IMR-90 (cell line): ENCODE measurements at regions of chr5 and their contacts with region 1.

Region 1: DNA sequence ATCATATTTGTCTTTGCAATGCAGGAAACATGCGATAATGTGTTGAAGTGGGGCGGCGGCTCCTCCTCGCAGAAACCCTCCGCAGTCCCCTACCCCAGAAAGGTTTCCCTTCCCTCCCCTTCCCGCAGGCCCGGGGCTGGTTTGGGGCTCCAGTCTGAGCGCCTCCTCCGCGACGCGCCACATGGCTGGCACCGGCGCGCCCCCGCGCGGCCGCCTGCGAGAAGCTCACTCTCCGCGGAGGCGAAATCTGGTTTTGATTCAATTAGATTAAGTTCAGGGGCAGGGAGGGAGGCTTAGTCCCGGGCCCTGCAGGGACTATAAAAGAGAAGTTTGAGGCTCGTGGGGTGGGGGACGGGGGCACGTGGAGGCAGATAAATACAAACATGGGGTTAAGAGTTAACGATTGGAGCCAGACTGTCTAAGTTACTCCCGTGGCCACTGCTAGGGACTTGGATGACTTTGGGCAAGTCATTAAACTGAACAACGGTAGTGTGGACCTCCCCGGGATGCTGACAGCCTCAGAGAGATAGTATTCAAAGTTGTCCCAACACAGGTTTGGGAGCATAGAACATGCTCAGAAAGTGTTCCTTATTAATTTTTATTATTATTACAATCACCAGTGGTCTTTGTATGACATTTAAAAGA is 69.4 kb downstream of the MSX2 start:
- DNase-seq: peak; percentile 43
- ATAC-seq: peak; percentile 98
- H3K4me3 ChIP-seq: no peak overlapping the region
- H3K27ac ChIP-seq: no peak overlapping the region
- H3K4me1 ChIP-seq: peaks cover 3% of the 10 kb centered on the region; the same call in 1 of the 2 replicates
- H3K27me3 ChIP-seq: peaks cover 6% of the 10 kb centered on the region
- CTCF ChIP-seq: peak; percentile 89
- POLR2A ChIP-seq: no peak
- RAD21 ChIP-seq: peak; percentile 94

Region 2: DNA sequence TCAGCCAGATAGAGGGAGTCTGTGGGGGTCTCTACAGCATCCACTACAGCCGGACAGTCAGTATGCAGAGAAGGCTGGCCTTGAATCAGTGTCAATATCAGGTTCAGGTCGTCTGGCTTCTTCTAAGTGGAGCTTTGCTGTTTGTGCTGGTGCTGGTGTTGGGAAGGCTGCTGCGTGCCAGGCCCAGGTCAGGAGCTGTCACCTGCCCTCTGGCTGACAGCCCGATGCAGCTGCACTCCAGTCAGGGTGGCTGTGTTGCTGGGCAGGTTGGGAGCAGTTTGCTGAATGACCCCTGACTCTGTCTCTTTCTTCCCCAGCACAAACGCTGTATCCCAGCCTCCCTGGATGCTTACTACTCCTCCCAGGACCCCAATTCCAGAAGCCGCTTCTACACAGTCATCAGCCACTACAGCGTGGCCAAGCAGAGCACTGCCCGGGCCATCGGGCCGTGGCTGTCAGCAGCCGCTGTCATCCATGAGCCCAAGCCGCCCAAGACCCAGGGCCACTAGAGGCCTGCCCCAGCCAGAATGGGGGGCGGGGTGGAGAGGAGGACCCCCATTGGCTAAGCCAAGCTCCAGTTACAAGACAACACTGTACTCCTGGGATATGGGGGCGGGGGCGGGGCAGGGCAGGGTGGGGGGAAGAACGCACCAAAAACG is 686.7 kb before region 1 on chr5:
- CTCF ChIA-PET with region 1: no interaction called
- POLR2A ChIA-PET with region 1: no interaction called
- dilution Hi-C with region 1: no loop called
- in situ Hi-C with region 1: no loop called
- intact Hi-C with region 1: no loop called
- DNase-seq: no peak
- ATAC-seq: no peak
- H3K4me3 ChIP-seq: no peak overlapping the region
- H3K27ac ChIP-seq: no peak overlapping the region
- H3K4me1 ChIP-seq: no peaks in the 10 kb centered on the region
- H3K27me3 ChIP-seq: no peaks in the 10 kb centered on the region
- CTCF ChIP-seq: no peak
- POLR2A ChIP-seq: no peak
- RAD21 ChIP-seq: no peak

Region 3: DNA sequence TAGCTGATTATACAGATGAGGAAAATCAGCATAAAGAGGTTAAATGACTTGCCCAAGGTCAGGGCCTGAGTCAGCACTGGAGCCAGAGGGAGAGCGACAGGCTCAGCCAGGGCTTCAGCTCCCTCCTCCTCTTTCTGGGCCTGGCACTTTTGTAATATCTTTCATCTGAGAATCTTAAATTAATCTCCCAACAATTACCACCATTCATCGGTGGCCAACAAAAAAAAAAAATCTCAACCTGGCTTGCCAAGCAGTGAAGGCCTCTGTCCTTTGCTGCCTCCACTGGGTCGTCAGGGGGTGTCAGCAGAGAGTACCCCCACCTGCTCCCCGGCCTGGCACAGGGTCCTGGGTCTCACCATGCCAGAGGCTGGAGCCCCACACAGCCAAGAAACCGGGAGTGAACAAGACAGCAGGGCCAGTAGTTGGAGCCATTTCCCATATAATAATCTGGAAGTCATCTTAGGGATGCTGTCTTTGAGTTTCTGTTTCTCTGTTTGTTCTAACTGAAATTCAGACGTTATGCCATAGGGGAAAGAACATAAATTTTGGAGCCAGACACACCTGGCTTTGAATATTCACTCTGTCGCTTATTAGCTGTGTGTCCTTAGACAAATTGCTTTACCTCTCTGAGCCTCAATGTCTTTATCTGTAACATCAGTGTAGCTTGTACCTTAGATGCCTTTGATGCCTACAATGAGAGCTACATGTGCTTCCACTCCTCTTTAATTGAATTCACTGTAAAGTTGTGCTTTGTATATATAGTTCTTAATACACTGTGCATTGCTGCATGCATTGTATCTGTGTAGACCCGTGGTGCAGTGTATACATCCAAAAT is 369.4 kb before region 1 on chr5:
- CTCF ChIA-PET with region 1: interaction called, 24 read pairs
- POLR2A ChIA-PET with region 1: no interaction called
- dilution Hi-C with region 1: no loop called
- in situ Hi-C with region 1: loop called (anchors 5 kb)
- intact Hi-C with region 1: loop called (anchors 1 kb)
- DNase-seq: no peak
- ATAC-seq: no peak; the same call in 1 of the 2 replicates
- H3K4me3 ChIP-seq: no peak overlapping the region
- H3K27ac ChIP-seq: no peak overlapping the region
- H3K4me1 ChIP-seq: peaks cover 1% of the 10 kb centered on the region; the same call in 1 of the 2 replicates
- H3K27me3 ChIP-seq: no peaks in the 10 kb centered on the region; the same call in 1 of the 2 replicates
- CTCF ChIP-seq: peak; percentile 39
- POLR2A ChIP-seq: no peak
- RAD21 ChIP-seq: peak; percentile 32; the same call in 1 of the 2 replicates

Region 4: DNA sequence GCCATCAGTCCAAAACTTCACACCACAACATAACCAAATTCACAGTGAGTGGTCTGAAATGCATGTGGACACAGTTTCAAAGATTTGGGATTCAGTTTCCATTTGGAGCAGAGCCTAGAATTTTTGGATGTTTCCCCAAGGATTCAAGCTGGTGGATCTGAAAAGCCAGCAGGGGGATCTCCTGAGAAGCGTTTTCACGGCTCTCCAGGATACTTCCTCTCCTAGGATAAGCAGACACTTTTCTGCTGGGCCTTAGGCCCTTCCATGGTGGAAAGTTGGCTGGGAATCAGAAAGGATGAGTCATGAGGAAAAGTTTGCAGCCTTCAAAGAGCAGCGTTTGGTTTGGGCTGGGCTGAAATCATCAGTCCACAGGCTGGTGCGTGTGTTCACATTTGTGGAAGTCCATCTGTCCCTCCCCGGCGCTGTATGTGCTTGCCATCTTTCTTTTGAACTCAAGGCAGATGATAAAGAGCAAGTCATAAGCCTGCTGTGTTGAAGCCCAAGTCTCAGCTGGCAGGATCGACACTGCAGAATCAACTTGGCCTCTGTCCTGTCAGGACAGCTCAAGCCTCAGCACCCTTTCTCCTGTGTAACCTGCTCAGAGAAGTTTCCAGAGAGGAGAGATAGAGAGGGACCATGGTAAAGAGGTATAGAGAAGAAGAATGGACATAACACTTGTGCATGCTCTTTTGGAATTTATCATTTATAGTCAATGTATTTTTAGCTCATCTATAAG is 222.0 kb before region 1 on chr5:
- CTCF ChIA-PET with region 1: no interaction called
- POLR2A ChIA-PET with region 1: no interaction called
- dilution Hi-C with region 1: no loop called
- in situ Hi-C with region 1: no loop called
- intact Hi-C with region 1: loop called (anchors 1 kb)
- DNase-seq: peak; percentile 98
- ATAC-seq: peak; percentile 92
- H3K4me3 ChIP-seq: no peak overlapping the region
- H3K27ac ChIP-seq: peak overlapping the region; percentile 77
- H3K4me1 ChIP-seq: peaks cover 12% of the 10 kb centered on the region
- H3K27me3 ChIP-seq: no peaks in the 10 kb centered on the region
- CTCF ChIP-seq: peak; percentile 59
- POLR2A ChIP-seq: no peak
- RAD21 ChIP-seq: peak; percentile 48

Region 5: DNA sequence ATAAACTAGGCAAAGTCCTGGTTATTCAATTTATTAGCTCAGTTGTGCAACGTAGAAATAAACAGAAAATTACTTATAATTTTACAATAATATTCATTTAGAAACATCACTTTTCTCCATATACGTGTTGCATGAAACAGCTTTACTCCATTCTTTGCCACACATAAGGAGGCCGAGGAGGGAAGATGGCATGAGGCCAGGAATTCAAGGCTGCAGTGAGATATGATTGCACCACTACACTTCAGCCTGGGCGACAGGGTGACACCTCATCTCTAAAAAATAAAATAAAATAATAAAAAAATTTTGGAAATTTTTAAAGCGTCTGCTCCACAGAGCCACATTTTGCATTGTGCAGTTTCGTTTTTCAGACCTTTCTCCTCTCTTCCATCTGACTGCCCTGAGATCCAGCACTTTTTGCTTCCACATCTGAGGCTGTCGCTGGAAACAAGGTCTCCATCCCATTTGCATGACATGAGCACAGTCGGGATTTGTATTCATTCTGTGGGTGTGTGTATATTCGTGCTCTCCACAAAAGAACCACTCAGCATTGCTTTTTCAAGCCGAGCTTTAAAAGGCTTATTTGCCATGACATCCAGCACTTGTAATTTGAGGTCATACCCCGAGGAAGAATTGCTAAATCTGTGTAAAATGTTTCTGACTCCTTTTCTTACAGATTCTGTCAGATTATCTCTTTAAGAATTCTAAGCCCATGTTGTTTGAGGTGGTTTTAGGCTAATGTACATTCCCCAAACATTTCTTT is 168.0 kb before region 1 on chr5:
- CTCF ChIA-PET with region 1: no interaction called
- POLR2A ChIA-PET with region 1: no interaction called
- dilution Hi-C with region 1: no loop called
- in situ Hi-C with region 1: no loop called
- intact Hi-C with region 1: no loop called
- DNase-seq: peak; percentile 7
- ATAC-seq: peak; percentile 66
- H3K4me3 ChIP-seq: no peak overlapping the region
- H3K27ac ChIP-seq: peak overlapping the region; percentile 37; the same call in 1 of the 2 replicates
- H3K4me1 ChIP-seq: peaks cover 2% of the 10 kb centered on the region; the same call in 1 of the 2 replicates
- H3K27me3 ChIP-seq: no peaks in the 10 kb centered on the region
- CTCF ChIP-seq: no peak
- POLR2A ChIP-seq: no peak
- RAD21 ChIP-seq: no peak

Region 6: DNA sequence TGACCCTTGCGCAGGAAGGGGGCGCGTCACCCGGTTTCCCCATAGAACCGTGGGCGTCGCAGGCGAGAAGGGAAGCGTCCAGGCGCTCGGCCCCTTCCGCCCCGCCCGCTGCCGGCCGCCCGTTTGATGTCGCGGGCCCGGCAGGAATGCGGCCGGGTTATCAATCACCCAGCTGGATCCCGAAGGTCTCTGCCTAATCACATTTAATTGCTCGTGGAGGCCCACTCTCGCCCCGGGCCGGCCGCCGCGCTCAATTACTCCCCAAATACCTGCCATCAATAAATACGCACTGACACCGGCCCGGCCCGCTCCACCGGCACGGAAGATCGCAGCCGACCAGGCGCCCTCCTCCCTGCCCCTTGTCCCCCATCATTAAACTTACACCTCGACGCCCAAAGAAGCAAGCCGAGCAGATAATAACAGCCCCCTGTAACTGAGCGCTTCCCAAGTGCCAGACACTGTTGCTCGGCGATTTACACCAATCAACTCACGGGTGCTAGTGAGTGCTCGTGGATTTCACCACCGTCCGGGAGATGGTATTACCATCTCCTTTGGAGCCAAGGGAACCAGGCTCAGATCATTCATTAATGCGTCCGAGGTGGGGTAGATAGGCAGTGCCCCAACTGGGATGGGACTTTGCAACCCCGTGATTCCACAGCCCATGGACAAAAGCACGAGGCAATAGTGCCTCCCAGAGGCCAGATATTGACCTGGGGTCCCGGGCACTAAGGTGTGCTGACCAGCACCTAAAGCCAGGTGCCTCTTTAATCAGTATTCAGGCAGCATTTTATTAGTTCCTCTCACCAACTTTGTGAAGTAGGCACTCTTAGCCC is 58.1 kb before region 1 on chr5:
- CTCF ChIA-PET with region 1: no interaction called
- POLR2A ChIA-PET with region 1: no interaction called
- dilution Hi-C with region 1: no loop called
- in situ Hi-C with region 1: no loop called
- intact Hi-C with region 1: loop called (anchors 5 kb)
- DNase-seq: no peak
- ATAC-seq: peak; percentile 51
- H3K4me3 ChIP-seq: peak overlapping the region; percentile 2; the same call in 1 of the 2 replicates
- H3K27ac ChIP-seq: peak overlapping the region; percentile 36
- H3K4me1 ChIP-seq: peaks cover 6% of the 10 kb centered on the region
- H3K27me3 ChIP-seq: peaks cover 27% of the 10 kb centered on the region
- CTCF ChIP-seq: peak; percentile 39
- POLR2A ChIP-seq: no peak
- RAD21 ChIP-seq: peak; percentile 61

Region 7: DNA sequence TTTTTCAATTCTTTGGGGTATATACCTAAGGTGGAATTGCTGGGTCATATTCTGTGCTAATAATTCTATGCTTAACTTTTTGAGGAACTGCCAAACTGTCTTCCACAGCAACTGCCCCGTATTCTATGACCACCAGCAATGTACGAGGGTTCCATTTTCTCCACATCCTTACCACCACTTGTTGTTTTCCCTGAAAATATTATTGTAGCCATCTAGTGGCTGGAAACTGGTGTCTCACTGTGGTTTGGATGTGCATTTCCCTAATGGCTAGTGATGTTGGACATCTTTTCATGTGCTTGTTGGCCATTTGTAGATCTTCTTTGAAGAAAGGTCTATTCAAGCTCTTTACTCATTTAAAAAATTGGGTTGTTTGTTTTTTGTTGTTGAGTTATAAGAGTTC is 38.7 kb before region 1 on chr5:
- CTCF ChIA-PET with region 1: no interaction called
- POLR2A ChIA-PET with region 1: no interaction called
- dilution Hi-C with region 1: no loop called
- in situ Hi-C with region 1: no loop called
- intact Hi-C with region 1: no loop called
- DNase-seq: peak; percentile 22
- ATAC-seq: peak; percentile 42
- H3K4me3 ChIP-seq: no peak overlapping the region
- H3K27ac ChIP-seq: no peak overlapping the region
- H3K4me1 ChIP-seq: no peaks in the 10 kb centered on the region; the same call in 1 of the 2 replicates
- H3K27me3 ChIP-seq: peaks cover 7% of the 10 kb centered on the region
- CTCF ChIP-seq: peak; percentile 48
- POLR2A ChIP-seq: no peak
- RAD21 ChIP-seq: peak; percentile 36

Region 8: DNA sequence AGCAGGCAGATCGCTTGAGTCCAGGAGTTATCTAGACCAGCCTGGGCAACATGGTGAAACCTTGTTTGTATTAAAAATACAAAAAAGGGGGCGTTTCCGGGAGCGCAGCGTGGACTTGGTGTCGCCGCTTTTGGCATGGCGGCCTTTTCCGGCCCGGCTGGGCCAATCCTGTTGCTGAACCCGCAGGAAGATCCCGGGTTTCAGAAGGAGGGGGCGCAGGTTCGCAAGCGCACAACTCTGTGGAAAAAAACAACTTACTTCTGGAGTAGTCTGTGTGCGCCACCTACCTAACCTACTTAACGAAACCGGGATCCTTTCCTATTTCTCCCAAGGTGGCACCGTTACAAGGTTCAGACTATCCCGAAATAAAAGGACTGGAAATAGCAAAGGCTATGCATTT is 129.1 kb after region 1 on chr5:
- CTCF ChIA-PET with region 1: no interaction called
- POLR2A ChIA-PET with region 1: no interaction called
- dilution Hi-C with region 1: no loop called
- in situ Hi-C with region 1: no loop called
- intact Hi-C with region 1: no loop called
- DNase-seq: no peak
- ATAC-seq: no peak
- H3K4me3 ChIP-seq: no peak overlapping the region
- H3K27ac ChIP-seq: no peak overlapping the region
- H3K4me1 ChIP-seq: no peaks in the 10 kb centered on the region
- H3K27me3 ChIP-seq: no peaks in the 10 kb centered on the region
- CTCF ChIP-seq: no peak
- POLR2A ChIP-seq: no peak
- RAD21 ChIP-seq: no peak